PC-3 (cell line): ENCODE measurements at regions of chr2 and their contacts with region 1.

Region 1: GRCh38 chr2:218648088-218648786 is 11.2 kb downstream of the ZNF142 start:
- DNase-seq: peak; percentile 80
- ATAC-seq: peak; percentile 54
- H3K4me3 ChIP-seq: no peak overlapping the region
- H3K27ac ChIP-seq: no peak overlapping the region
- H3K4me1 ChIP-seq: peaks cover 31% of the 10 kb centered on the region
- H3K27me3 ChIP-seq: no peaks in the 10 kb centered on the region
- CTCF ChIP-seq: peak; percentile 94

Region 2: DNA sequence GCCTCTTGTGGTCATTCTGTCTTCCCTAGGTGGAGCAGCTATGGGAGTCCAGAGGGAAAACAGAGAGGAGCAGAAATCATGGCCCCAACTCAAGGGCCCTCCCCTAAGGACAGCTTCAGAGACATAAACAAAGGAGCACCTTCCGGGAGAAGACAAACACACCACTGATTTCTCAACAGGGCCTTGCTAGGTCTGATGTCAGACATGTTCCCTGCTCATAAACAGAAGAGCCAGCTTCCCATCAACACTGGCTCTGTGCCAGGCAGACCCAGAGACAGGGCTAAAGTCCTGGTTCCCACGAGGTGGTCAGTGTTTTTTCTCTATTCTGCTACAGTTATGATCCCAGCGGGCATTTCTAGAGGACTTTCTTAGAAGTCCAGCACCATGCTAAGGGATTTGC is 503.1 kb before region 1 on chr2:
- CTCF ChIA-PET with region 1: no interaction called
- POLR2A ChIA-PET with region 1: no interaction called
- intact Hi-C with region 1: no loop called
- DNase-seq: no peak
- ATAC-seq: no peak
- H3K4me3 ChIP-seq: no peak overlapping the region
- H3K27ac ChIP-seq: no peak overlapping the region
- H3K4me1 ChIP-seq: no peaks in the 10 kb centered on the region
- H3K27me3 ChIP-seq: peaks cover 17% of the 10 kb centered on the region
- CTCF ChIP-seq: no peak

Region 3: GRCh38 chr2:218568190-218569037 is 79.8 kb before region 1 on chr2 and contains the starts of genes CNOT9 and USP37:
- CTCF ChIA-PET with region 1: interaction called, 3 read pairs
- POLR2A ChIA-PET with region 1: no interaction called
- intact Hi-C with region 1: loop called (anchors 5 kb)
- DNase-seq: peak; percentile 98
- ATAC-seq: peak; percentile 88
- H3K4me3 ChIP-seq: peak within 1 kb of the TSS; percentile 84
- H3K27ac ChIP-seq: peak within 1 kb of the TSS; percentile 85
- H3K4me1 ChIP-seq: peaks cover 25% of the 10 kb centered on the region
- H3K27me3 ChIP-seq: no peaks in the 10 kb centered on the region
- CTCF ChIP-seq: no peak
- total RNA-seq, gene CNOT9: 78.0 and 86.8 TPM in 2 replicates
- total RNA-seq, gene USP37: 10.7 and 11.6 TPM in 2 replicates

Region 4: GRCh38 chr2:218582076-218582475 is 66.2 kb before region 1 on chr2:
- CTCF ChIA-PET with region 1: no interaction called
- POLR2A ChIA-PET with region 1: no interaction called
- intact Hi-C with region 1: loop called (anchors 5 kb)
- DNase-seq: peak; percentile 96
- ATAC-seq: peak; percentile 96
- H3K4me3 ChIP-seq: 0 out of 2 replicates have a peak overlapping the region, but pooled peaks have one; percentile 28
- H3K27ac ChIP-seq: peak overlapping the region; percentile 88
- H3K4me1 ChIP-seq: peaks cover 23% of the 10 kb centered on the region
- H3K27me3 ChIP-seq: no peaks in the 10 kb centered on the region
- CTCF ChIP-seq: no peak

Region 5: GRCh38 chr2:218659258-218659987 is 11.2 kb after region 1 on chr2 and contains the starts of genes BCS1L and ZNF142:
- CTCF ChIA-PET with region 1: interaction called, 7 read pairs
- POLR2A ChIA-PET with region 1: interaction called, 10 read pairs
- intact Hi-C with region 1: no loop called
- DNase-seq: peak; percentile 91
- ATAC-seq: peak; percentile 92
- H3K4me3 ChIP-seq: peak within 1 kb of the TSS; percentile 100
- H3K27ac ChIP-seq: peak within 1 kb of the TSS; percentile 61
- H3K4me1 ChIP-seq: peaks cover 20% of the 10 kb centered on the region
- H3K27me3 ChIP-seq: no peaks in the 10 kb centered on the region
- CTCF ChIP-seq: no peak
- total RNA-seq, gene BCS1L: 41.3 and 48.5 TPM in 2 replicates
- total RNA-seq, gene ZNF142: 35.5 and 36.3 TPM in 2 replicates